HEK293T (cell line): ENCODE measurements at regions of chr14 and their contacts with region 1.

Region 1: GRCh38 chr14:60248697-60249318 is at the start of gene PPM1A:
- DNase-seq: peak; percentile 94

Region 2: GRCh38 chr14:59926534-59926933 is 322.3 kb before region 1 on chr14:
- CTCF ChIA-PET with region 1: no interaction called
- POLR2A ChIA-PET with region 1: no interaction called
- DNase-seq: no peak

Region 3: DNA sequence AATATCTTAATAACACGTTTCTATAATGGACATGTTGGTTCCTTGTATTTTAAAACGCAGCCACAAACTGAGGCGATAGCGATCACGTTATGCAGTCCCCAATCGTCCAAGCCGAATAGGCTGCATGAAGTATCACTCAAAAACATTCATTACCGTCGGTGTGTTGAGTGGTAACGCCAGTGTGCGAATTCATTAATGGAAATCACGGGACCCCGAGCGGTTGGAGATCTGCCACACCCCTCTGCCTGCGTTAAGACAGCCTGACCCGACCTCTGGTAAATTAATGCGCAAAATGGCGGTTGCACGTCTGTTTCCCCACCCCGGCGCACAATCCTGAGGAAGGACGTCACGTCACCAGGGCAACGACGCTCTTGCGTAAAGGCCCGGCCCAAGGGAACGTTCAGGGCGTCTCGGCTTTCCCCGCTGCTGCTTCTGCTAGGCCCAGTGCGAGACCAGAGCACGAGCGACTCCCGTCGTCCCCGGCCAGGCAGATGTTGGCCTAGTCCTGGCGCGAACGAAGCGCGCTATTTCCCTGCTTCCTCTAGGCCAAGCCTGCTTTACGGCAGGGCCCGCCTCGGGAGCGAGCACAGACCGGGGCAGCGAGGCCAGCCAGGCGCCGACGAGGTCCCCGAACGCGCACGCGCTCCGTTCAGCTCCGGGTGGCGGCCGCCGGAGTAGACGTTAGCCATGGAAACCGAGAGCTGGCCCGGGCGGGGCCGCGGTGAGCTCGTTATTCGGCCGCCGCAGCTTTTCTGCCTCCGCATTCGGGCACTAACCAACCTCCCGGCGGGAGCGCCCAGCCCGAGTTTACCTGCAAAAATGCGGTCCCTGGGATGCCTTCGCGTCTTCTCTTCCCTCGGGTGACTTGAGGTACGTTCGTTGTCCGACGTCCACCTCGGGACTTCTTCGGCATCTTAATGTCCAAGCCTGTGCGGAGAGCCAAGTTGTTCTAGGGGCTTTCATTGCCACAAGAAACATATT is 157.0 kb before region 1 on chr14 and contains the start of gene PCNX4:
- CTCF ChIA-PET with region 1: interaction called, 3 read pairs
- POLR2A ChIA-PET with region 1: interaction called, 11 read pairs
- DNase-seq: peak; percentile 89

Region 4: GRCh38 chr14:60204104-60204842 is 44.5 kb before region 1 on chr14:
- CTCF ChIA-PET with region 1: no interaction called
- POLR2A ChIA-PET with region 1: interaction called, 12 read pairs
- DNase-seq: no peak

Region 5: GRCh38 chr14:60266021-60266937 is 17.5 kb after region 1 on chr14:
- CTCF ChIA-PET with region 1: no interaction called
- POLR2A ChIA-PET with region 1: interaction called, 11 read pairs
- DNase-seq: peak; percentile 47

Region 6: GRCh38 chr14:60331201-60332045 is 82.6 kb after region 1 on chr14:
- CTCF ChIA-PET with region 1: interaction called, 4 read pairs
- POLR2A ChIA-PET with region 1: interaction called, 21 read pairs
- DNase-seq: peak; percentile 71